Natural killer cell (primary cell): ENCODE measurements at regions of chr6 and their contacts with region 1.

Region 1: GRCh38 chr6:24720604-24721460 is 1.9 kb upstream of the C6orf62 start:
- DNase-seq: peak; percentile 100
- ATAC-seq: peak; percentile 75 to 93 (median 79)
- H3K4me3 ChIP-seq: peak overlapping the region; percentile 100
- H3K4me3 Mint-ChIP-seq: peak overlapping the region; percentile 100
- H3K27ac ChIP-seq: peak overlapping the region; percentile 100
- H3K27ac Mint-ChIP-seq: peak overlapping the region; percentile 96 to 99
- H3K4me1 ChIP-seq: peaks cover 28% of the 10 kb centered on the region
- H3K4me1 Mint-ChIP-seq: peaks cover 52 to 62% of the 10 kb centered on the region in 2 donors
- H3K27me3 ChIP-seq: no peaks in the 10 kb centered on the region
- H3K27me3 Mint-ChIP-seq: no peaks in the 10 kb centered on the region
- CTCF ChIP-seq: no peak

Region 2: DNA sequence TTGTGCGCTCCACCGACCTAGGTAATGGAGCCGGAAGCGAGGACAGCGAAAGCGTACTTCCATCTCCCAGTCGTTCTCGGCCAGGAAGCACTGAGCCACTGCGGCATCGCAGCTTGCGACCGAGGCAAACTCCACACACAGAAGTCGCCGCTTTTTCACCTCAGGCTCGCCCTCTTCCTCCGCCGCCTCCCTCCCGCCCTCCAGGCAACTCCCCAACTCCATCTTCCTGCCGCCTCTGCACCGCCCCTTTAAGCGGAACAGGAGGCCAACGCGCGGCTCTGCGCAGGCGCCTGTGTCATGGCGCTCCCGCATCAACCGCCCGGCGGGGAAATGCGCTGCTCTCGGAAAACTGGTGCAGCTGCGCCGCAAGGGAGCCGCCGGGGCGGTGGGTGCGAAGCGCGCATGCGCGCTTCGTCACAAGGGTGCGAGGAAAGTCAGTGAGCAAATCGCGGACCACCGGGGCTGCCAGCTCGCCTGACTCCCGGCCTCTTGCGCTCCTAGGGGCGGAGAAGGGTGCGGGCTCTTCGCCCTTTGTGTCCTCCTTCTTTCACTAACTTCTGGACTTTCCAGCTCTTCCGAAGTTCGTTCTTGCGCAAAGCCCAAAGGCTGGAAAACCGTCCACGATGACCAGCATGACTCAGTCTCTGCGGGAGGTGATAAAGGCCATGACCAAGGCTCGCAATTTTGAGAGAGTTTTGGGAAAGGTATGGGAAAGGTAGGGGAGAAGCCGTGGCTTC is 54.0 kb before region 1 on chr6 and contains the starts of genes ACOT13 and TDP2:
- intact Hi-C with region 1: loop called (anchors 1 kb)
- DNase-seq: peak; percentile 92 to 99
- ATAC-seq: peak; percentile 90 to 97 (median 93)
- H3K4me3 ChIP-seq: peak within 1 kb of the TSS; percentile 95
- H3K4me3 Mint-ChIP-seq: peak within 1 kb of the TSS; percentile 98
- H3K27ac ChIP-seq: peak within 1 kb of the TSS; percentile 86
- H3K27ac Mint-ChIP-seq: peak within 1 kb of the TSS; percentile 96 to 98
- H3K4me1 ChIP-seq: peaks cover 21% of the 10 kb centered on the region
- H3K4me1 Mint-ChIP-seq: peaks cover 61 to 65% of the 10 kb centered on the region in 2 donors
- H3K27me3 ChIP-seq: no peaks in the 10 kb centered on the region
- H3K27me3 Mint-ChIP-seq: no peaks in the 10 kb centered on the region
- CTCF ChIP-seq: peak; percentile 55
- total RNA-seq, gene ACOT13: 3.2 to 4.3 (median 4.2) TPM
- total RNA-seq, gene TDP2: 43.2 to 51.9 (median 49.5) TPM

Region 3: DNA sequence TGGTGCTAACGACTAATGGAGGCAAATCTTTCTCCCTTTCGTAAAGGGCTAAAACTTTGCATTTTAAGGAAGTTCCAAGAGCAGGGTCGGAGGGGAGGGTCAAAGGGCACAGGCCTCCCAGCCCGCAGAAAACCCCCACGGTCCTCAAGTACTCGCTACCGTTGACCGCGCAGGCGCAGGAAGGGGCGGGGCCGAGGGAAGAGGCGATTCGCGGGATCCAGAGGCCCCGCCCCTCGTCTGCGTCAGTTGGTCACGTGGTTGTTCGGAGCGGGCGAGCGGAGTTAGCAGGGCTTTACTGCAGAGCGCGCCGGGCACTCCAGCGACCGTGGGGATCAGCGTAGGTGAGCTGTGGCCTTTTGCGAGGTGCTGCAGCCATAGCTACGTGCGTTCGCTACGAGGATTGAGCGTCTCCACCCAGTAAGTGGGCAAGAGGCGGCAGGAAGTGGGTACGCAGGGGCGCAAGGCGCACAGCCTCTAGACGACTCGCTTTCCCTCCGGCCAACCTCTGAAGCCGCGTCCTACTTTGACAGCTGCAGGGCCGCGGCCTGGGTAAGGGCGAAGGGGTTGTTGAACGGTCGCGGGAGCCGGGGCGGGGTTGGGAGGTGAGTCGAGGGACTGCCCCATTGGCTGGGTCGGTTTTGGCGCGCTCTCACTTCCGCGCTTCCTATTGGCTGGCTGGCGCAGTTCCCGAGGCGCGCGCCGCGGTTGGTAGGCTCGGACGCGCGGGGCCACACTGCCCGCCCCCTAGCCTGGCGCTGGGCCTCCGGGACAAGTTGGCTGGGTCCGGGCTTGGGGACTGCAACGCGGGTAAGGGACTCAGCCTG is 54.1 kb after region 1 on chr6 and contains the start of gene GMNN:
- intact Hi-C with region 1: loop called (anchors 1 kb)
- DNase-seq: peak; percentile 98 to 99
- ATAC-seq: peak; percentile 87 to 96 (median 89)
- H3K4me3 ChIP-seq: peak within 1 kb of the TSS; percentile 94
- H3K4me3 Mint-ChIP-seq: peak within 1 kb of the TSS; percentile 98
- H3K27ac ChIP-seq: peak within 1 kb of the TSS; percentile 89
- H3K27ac Mint-ChIP-seq: peak within 1 kb of the TSS; percentile 90 to 96
- H3K4me1 ChIP-seq: peaks cover 11% of the 10 kb centered on the region
- H3K4me1 Mint-ChIP-seq: peaks cover 17 to 29% of the 10 kb centered on the region in 2 donors
- H3K27me3 ChIP-seq: no peaks in the 10 kb centered on the region
- H3K27me3 Mint-ChIP-seq: no peaks in the 10 kb centered on the region
- CTCF ChIP-seq: no peak
- total RNA-seq, gene GMNN: 11.0 to 23.7 (median 17.8) TPM

Region 4: GRCh38 chr6:24910961-24911712 is 190.3 kb after region 1 on chr6:
- intact Hi-C with region 1: loop called (anchors 10 kb)
- DNase-seq: peak; percentile 55 to 74
- ATAC-seq: peak; percentile 63 to 74 (median 74)
- H3K4me3 ChIP-seq: peak overlapping the region; percentile 43
- H3K4me3 Mint-ChIP-seq: peak overlapping the region; percentile 88
- H3K27ac ChIP-seq: peak overlapping the region; percentile 82
- H3K27ac Mint-ChIP-seq: peak overlapping the region; percentile 89 to 93
- H3K4me1 ChIP-seq: peaks cover 81% of the 10 kb centered on the region
- H3K4me1 Mint-ChIP-seq: peaks cover 96 to 98% of the 10 kb centered on the region in 2 donors
- H3K27me3 ChIP-seq: no peaks in the 10 kb centered on the region
- H3K27me3 Mint-ChIP-seq: no peaks in the 10 kb centered on the region
- CTCF ChIP-seq: no peak

Region 5: GRCh38 chr6:25006565-25007001 is 285.8 kb after region 1 on chr6:
- intact Hi-C with region 1: loop called (anchors 2 kb)
- DNase-seq: peak in 1 of 2 donors; percentile 62
- ATAC-seq: peak; percentile 21 to 78 (median 34)
- H3K4me3 ChIP-seq: no peak overlapping the region
- H3K4me3 Mint-ChIP-seq: peak overlapping the region; percentile 83
- H3K27ac ChIP-seq: peak overlapping the region; percentile 86
- H3K27ac Mint-ChIP-seq: peak overlapping the region; percentile 91 to 95
- H3K4me1 ChIP-seq: peaks cover 51% of the 10 kb centered on the region
- H3K4me1 Mint-ChIP-seq: peaks cover 74 to 81% of the 10 kb centered on the region in 2 donors
- H3K27me3 ChIP-seq: no peaks in the 10 kb centered on the region
- H3K27me3 Mint-ChIP-seq: no peaks in the 10 kb centered on the region
- CTCF ChIP-seq: no peak